ENCODE measurements at regions of chr19 and their contacts with region 1.

Region 1: DNA sequence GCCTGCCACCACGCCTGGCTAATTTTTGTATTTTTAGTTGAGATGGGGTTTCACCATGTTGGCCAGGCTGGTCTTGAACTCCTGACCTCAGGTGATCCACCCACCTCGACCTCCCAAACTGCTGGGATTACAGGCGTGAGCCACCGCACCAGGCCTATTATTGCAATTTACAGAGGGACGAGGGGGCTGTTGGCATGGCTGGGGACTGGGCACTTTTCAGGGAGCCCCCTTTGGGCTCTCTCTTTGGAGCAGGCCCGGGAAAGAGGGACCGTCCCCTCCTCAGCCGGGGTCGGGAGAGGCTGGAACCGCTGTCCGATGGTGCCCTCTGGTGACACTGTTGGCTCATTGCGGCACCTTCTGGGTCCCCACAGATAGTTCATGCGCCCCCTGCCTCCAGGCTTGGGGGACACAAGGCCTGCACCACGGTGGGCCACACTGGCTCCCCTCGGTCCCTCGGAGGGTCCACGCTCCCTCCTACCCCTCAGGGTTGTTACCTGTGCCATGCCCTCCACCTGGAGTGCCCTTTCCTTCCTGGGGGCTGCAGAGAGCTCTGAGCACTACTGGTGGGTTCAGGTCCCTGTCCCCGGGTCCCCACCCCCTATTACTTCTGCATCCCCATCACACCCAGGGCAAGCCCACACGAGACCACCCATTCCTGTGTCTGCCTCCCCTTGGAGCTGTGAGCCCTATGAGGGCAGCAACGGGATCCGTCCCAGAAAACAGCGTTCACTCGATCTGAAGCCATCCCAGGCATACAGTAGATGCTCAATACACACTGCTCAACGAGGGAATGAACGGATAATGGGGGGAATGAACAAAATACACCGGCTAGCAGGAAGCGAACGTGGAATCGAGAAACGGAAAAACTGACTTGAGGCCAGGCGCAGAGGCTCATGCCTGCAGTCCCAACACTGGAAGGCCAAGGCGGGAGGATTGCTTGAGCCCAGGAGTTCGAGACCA is 12.5 kb downstream of the FEM1A start:
- DNase-seq: peak; percentile 40 to 72 (median 53)
- H3K4me3 ChIP-seq: no peak overlapping the region
- H3K4me3 Mint-ChIP-seq: no peak overlapping the region
- H3K27ac ChIP-seq: no peak overlapping the region
- H3K27ac Mint-ChIP-seq: peak overlapping the region in 1 of 8 donors; percentile 21
- H3K4me1 ChIP-seq: no peaks in the 10 kb centered on the region
- H3K4me1 Mint-ChIP-seq: peaks cover 0 to 3% (median 0%) of the 10 kb centered on the region in 3 donors
- H3K27me3 ChIP-seq: no peaks in the 10 kb centered on the region
- H3K27me3 Mint-ChIP-seq: no peaks in the 10 kb centered on the region

Region 2: DNA sequence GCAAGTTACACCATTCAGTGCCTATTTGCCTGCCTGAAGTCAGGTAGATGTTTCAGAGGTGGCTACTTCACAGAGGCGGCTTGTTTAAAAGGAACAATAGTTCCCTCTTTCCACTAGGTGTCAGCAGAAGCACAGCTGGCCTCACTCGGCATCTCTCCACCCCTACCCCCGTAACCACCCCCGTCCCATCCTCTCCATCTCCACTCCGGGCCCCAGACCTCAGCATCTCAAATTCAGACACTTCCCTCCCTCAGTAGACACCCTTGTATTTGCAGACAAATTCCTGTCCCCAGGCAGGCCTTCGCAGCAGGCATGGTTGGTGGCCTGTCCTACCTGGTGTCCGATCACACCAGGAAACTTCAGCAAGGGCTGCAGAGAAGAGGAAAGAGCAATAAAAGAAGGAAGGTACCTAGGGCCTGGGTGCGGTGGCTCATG is 71.3 kb before region 1 on chr19:
- CTCF ChIA-PET with region 1: interaction called, 4 read pairs
- POLR2A ChIA-PET with region 1: interaction called, 10 read pairs
- DNase-seq: peak; percentile 26 to 72 (median 54)
- H3K4me3 ChIP-seq: peak overlapping the region; percentile 23
- H3K4me3 Mint-ChIP-seq: peak overlapping the region in 6 of 7 donors; percentile 4 to 54 (median 32)
- H3K27ac ChIP-seq: no peak overlapping the region
- H3K27ac Mint-ChIP-seq: peak overlapping the region in 5 of 8 donors; percentile 5 to 95 (median 24)
- H3K4me1 ChIP-seq: peaks cover 4% of the 10 kb centered on the region
- H3K4me1 Mint-ChIP-seq: peaks cover 4 to 7% (median 5%) of the 10 kb centered on the region in 3 donors
- H3K27me3 ChIP-seq: peaks cover 3% of the 10 kb centered on the region
- H3K27me3 Mint-ChIP-seq: peaks cover 6 to 10% of the 10 kb centered on the region in 2 donors

Measured in CD8-positive, alpha-beta memory T cell (primary cell).